ENCODE measurements at regions of chr13 and their contacts with region 1.

Region 1: DNA sequence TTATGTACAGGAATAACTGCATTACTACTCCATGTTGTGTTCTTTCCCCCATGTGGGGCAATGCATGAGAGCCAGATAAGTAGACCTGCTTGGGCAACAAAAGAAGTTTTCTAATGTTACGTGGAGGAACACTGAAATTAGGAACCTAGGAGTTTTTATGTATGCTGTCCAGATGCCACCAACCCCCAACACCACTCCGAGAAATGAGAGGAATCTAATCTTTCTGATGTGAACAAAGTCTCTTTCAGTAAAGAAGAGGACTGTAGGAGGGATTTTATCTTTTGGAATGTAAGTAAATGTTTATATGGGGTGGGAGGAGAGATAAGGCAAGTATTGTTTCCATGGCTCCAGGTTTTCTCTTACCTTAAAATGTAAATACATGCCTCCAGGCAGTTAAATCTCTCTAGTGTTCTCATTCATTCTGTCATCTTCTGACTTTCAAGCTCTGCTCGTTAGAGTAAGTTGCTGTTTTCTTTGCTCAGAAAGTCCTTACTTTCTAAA is 820.6 kb downstream of the PCDH17 start:
- DNase-seq: peak; percentile 76 to 79
- H3K4me3 ChIP-seq: no peak overlapping the region
- H3K4me3 Mint-ChIP-seq: peak overlapping the region; percentile 52
- H3K27ac Mint-ChIP-seq: peak overlapping the region; percentile 84
- H3K4me1 ChIP-seq: peaks cover 27% of the 10 kb centered on the region
- H3K4me1 Mint-ChIP-seq: peaks cover 7% of the 10 kb centered on the region
- H3K27me3 ChIP-seq: no peaks in the 10 kb centered on the region
- H3K27me3 Mint-ChIP-seq: no peaks in the 10 kb centered on the region
- CTCF ChIP-seq: no peak

Region 2: GRCh38 chr13:58340895-58341294 is 111.3 kb before region 1 on chr13:
- CTCF ChIA-PET with region 1: no interaction called
- POLR2A ChIA-PET with region 1: no interaction called
- intact Hi-C with region 1: loop called (anchors 2 kb)
- DNase-seq: no peak
- H3K4me3 ChIP-seq: no peak overlapping the region
- H3K4me3 Mint-ChIP-seq: no peak overlapping the region
- H3K27ac Mint-ChIP-seq: no peak overlapping the region
- H3K4me1 ChIP-seq: no peaks in the 10 kb centered on the region
- H3K4me1 Mint-ChIP-seq: no peaks in the 10 kb centered on the region
- H3K27me3 ChIP-seq: no peaks in the 10 kb centered on the region
- H3K27me3 Mint-ChIP-seq: peaks cover 3% of the 10 kb centered on the region
- CTCF ChIP-seq: no peak

Region 3: GRCh38 chr13:58467176-58467575 is 15.0 kb after region 1 on chr13:
- CTCF ChIA-PET with region 1: no interaction called
- POLR2A ChIA-PET with region 1: no interaction called
- intact Hi-C with region 1: loop called (anchors 1 kb)
- DNase-seq: peak in 1 of 2 experiments; percentile 20
- H3K4me3 ChIP-seq: no peak overlapping the region
- H3K4me3 Mint-ChIP-seq: peak overlapping the region; percentile 12
- H3K27ac Mint-ChIP-seq: peak overlapping the region; percentile 42
- H3K4me1 ChIP-seq: peaks cover 29% of the 10 kb centered on the region
- H3K4me1 Mint-ChIP-seq: peaks cover 14% of the 10 kb centered on the region
- H3K27me3 ChIP-seq: no peaks in the 10 kb centered on the region
- H3K27me3 Mint-ChIP-seq: no peaks in the 10 kb centered on the region
- CTCF ChIP-seq: no peak

Region 4: DNA sequence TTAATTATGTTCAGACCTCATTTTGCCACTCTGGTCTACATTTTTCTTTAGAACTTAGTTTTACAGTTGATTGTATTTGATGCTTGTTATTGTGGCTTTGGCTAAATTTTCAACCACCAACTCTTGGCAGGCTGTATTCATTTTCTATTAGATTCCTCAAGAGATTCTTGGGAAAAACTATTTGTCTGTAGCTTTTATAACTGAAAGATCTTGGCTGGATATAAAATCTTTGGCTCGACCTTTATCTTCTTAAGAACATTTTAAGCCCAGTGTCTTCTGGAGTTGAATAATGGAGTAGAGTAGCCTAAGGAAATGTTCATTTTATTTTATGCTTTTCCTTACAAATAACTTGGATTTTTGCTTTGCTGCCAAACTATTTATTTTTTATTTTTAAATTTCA is 27.9 kb after region 1 on chr13:
- CTCF ChIA-PET with region 1: no interaction called
- POLR2A ChIA-PET with region 1: no interaction called
- intact Hi-C with region 1: no loop called
- DNase-seq: no peak
- H3K4me3 ChIP-seq: no peak overlapping the region
- H3K4me3 Mint-ChIP-seq: no peak overlapping the region
- H3K27ac Mint-ChIP-seq: no peak overlapping the region
- H3K4me1 ChIP-seq: no peaks in the 10 kb centered on the region
- H3K4me1 Mint-ChIP-seq: no peaks in the 10 kb centered on the region
- H3K27me3 ChIP-seq: no peaks in the 10 kb centered on the region
- H3K27me3 Mint-ChIP-seq: no peaks in the 10 kb centered on the region
- CTCF ChIP-seq: no peak